K562 (cell line): ENCODE measurements at regions of chrX and their contacts with region 1.

Region 1: GRCh38 chrX:55119712-55120111 is 30.9 kb downstream of the PAGE2 start:
- DNase-seq: no peak
- ATAC-seq: no peak
- H3K4me3 ChIP-seq: no peak overlapping the region
- H3K27ac ChIP-seq: no peak overlapping the region; the same call in 2 of the 3 replicates
- H3K4me1 ChIP-seq: peaks cover 0 to 62% of the 10 kb centered on the region in 2 experiments; a peak in 3 of 5 replicates
- H3K27me3 ChIP-seq: no peaks in the 10 kb centered on the region; a peak in 1 of 5 replicates
- CTCF ChIP-seq: no peak
- EP300 ChIP-seq: no peak
- POLR2A ChIP-seq: no peak
- RAD21 ChIP-seq: no peak

Region 2: GRCh38 chrX:54529552-54530357 is 590.0 kb before region 1 on chrX and contains the start of gene GNL3L:
- CTCF ChIA-PET with region 1: no interaction called
- POLR2A ChIA-PET with region 1: no interaction called
- in situ Hi-C with region 1: no loop called
- intact Hi-C with region 1: no loop called
- DNase-seq: peak; percentile 88 to 93 (median 92)
- ATAC-seq: peak; percentile 91
- H3K4me3 ChIP-seq: peak within 1 kb of the TSS; percentile 89
- H3K27ac ChIP-seq: peak within 1 kb of the TSS; percentile 96
- H3K4me1 ChIP-seq: peaks cover 4 to 21% of the 10 kb centered on the region in 2 experiments; a peak in 3 of 5 replicates
- H3K27me3 ChIP-seq: no peaks in the 10 kb centered on the region
- CTCF ChIP-seq: no peak
- EP300 ChIP-seq: no peak
- POLR2A ChIP-seq: peak; percentile 41
- RAD21 ChIP-seq: no peak
- polyA plus RNA-seq, gene GNL3L: 11.5 to 11.9 TPM

Region 3: GRCh38 chrX:55028040-55028439 is 91.7 kb before region 1 on chrX:
- CTCF ChIA-PET with region 1: no interaction called
- POLR2A ChIA-PET with region 1: no interaction called
- in situ Hi-C with region 1: no loop called
- intact Hi-C with region 1: loop called (anchors 2 kb)
- DNase-seq: peak; percentile 61 to 88 (median 76)
- ATAC-seq: peak; percentile 92
- H3K4me3 ChIP-seq: no peak overlapping the region
- H3K27ac ChIP-seq: peak overlapping the region; percentile 52; the same call in 1 of the 3 replicates
- H3K4me1 ChIP-seq: peaks cover 9 to 35% of the 10 kb centered on the region in 2 experiments; a peak in 4 of 5 replicates
- H3K27me3 ChIP-seq: no peaks in the 10 kb centered on the region
- CTCF ChIP-seq: no peak
- EP300 ChIP-seq: peak; percentile 93
- POLR2A ChIP-seq: no peak
- RAD21 ChIP-seq: no peak

Region 4: DNA sequence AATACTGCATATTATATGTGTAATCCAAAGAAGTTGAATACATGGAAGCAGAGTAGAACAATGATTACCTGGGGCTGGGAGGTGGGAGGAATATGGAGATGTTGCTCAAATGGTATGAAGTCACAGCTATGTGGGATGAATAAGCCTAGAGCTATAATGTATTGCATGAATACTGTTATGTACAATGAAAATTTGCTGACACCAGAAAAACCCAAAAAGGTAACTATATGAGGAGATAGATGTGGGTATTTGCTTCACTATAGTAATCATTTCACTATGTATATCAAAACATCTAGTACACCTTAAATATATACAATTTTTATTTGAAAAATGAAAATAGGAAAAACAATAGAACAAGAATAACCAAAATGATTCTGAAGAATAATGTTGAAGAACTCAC is 133.8 kb after region 1 on chrX:
- CTCF ChIA-PET with region 1: no interaction called
- POLR2A ChIA-PET with region 1: no interaction called
- in situ Hi-C with region 1: no loop called
- intact Hi-C with region 1: no loop called
- DNase-seq: no peak
- ATAC-seq: no peak
- H3K4me3 ChIP-seq: no peak overlapping the region
- H3K27ac ChIP-seq: no peak overlapping the region
- H3K4me1 ChIP-seq: no peaks in the 10 kb centered on the region
- H3K27me3 ChIP-seq: no peaks in the 10 kb centered on the region
- CTCF ChIP-seq: no peak
- EP300 ChIP-seq: no peak
- POLR2A ChIP-seq: no peak
- RAD21 ChIP-seq: no peak